Right cardiac atrium (tissue), 5 donors: ENCODE measurements at regions of chr18 and their contacts with region 1.

Region 1: DNA sequence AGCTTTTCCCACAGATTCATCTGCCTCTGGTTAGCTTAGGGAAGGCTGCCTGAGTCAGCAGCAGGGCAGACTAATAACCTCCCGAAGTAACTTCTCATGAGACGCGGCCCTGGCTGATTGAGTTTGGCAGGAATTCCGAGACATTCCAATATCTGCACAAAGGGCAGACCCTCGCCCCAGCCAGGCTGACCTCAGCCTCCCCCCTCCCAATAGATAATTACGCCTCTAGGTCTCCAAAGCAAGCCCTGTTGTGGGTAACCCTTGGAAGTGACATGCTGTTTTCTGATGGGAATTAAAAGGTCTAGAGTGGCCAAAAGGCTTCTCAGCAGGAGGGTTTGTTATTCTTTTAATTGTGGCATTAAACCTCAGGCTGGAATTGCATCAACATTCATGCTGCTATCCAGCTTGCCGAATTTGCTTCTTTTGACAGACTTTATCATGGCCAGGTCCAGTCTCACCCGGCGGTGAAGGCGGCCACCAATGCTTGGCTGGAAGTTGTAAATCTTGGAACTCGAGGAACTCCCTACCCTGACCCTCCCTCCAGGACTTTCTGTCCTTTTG is 98.0 kb upstream of the SLC14A2 start:
- DNase-seq: peak; percentile 81 to 93 (median 90)
- ATAC-seq: peak; percentile 88 to 92
- H3K4me3 ChIP-seq: no peak overlapping the region
- H3K27ac ChIP-seq: no peak overlapping the region
- H3K4me1 ChIP-seq: peaks cover 4% of the 10 kb centered on the region
- H3K27me3 ChIP-seq: no peaks in the 10 kb centered on the region

Region 2: GRCh38 chr18:45449418-45450227 is 67.6 kb before region 1 on chr18:
- intact Hi-C with region 1: loop called in 2 of 4 experiments (anchors 10 kb)
- DNase-seq: peak; percentile 72 to 84 (median 83)
- ATAC-seq: peak; percentile 83 to 89
- H3K4me3 ChIP-seq: no peak overlapping the region
- H3K27ac ChIP-seq: peak overlapping the region; percentile 3
- H3K4me1 ChIP-seq: no peaks in the 10 kb centered on the region
- H3K27me3 ChIP-seq: no peaks in the 10 kb centered on the region